ENCODE measurements at regions of chr2 and their contacts with region 1.

Region 1: GRCh38 chr2:47512581-47513083 is 109.7 kb downstream of the MSH2 start:
- DNase-seq: no peak
- CTCF ChIP-seq: no peak

Region 2: DNA sequence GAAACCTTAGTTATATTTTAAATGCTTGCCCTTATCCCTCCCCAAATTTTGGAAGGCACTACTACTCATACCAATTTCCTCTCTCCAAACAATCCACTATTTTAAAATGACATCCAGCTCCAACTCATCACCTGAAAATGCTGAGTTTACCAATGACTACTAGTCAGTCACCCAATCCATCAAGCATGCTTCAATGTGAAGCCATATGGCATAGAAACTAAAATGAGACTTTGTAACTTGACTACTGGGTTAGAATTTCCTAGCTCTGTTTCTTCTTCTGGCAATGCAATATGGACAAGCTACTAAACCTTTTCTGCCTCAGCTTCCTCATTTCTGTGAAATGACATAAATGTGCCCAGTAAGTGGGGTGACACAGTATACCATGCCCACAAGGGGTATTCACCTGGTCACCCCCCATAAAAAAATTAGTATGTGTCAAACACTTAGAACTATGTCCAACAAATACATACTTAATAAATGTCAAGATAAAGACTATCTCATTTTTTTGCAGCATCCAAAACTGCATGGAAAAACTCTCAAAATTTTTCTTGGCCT is 347.6 kb before region 1 on chr2:
- in situ Hi-C with region 1: no loop called
- DNase-seq: no peak
- CTCF ChIP-seq: no peak

Region 3: GRCh38 chr2:47767880-47768609 is 255.4 kb after region 1 on chr2:
- in situ Hi-C with region 1: loop called (anchors 10 kb)
- DNase-seq: peak; percentile 79
- CTCF ChIP-seq: peak; percentile 99